ENCODE measurements at regions of chr5 and their contacts with region 1.

Region 1: GRCh38 chr5:151252762-151253604 is at the start of gene GM2A:
- DNase-seq: peak; percentile 99
- ATAC-seq: peak; percentile 83
- H3K4me3 ChIP-seq: peak within 1 kb of the TSS; percentile 74 to 96 (median 89)
- H3K4me3 Mint-ChIP-seq: peak within 1 kb of the TSS; percentile 95
- H3K27ac ChIP-seq: peak within 1 kb of the TSS; percentile 70 to 90
- H3K27ac Mint-ChIP-seq: peak within 1 kb of the TSS; percentile 88
- H3K4me1 ChIP-seq: peaks cover 48 to 54% of the 10 kb centered on the region in 2 donors
- H3K4me1 Mint-ChIP-seq: peaks cover 52% of the 10 kb centered on the region
- H3K27me3 ChIP-seq: no peaks in the 10 kb centered on the region
- H3K27me3 Mint-ChIP-seq: no peaks in the 10 kb centered on the region
- CTCF ChIP-seq: no peak
- total RNA-seq, gene GM2A: 82.7 and 89.3 TPM in 2 replicates

Region 2: DNA sequence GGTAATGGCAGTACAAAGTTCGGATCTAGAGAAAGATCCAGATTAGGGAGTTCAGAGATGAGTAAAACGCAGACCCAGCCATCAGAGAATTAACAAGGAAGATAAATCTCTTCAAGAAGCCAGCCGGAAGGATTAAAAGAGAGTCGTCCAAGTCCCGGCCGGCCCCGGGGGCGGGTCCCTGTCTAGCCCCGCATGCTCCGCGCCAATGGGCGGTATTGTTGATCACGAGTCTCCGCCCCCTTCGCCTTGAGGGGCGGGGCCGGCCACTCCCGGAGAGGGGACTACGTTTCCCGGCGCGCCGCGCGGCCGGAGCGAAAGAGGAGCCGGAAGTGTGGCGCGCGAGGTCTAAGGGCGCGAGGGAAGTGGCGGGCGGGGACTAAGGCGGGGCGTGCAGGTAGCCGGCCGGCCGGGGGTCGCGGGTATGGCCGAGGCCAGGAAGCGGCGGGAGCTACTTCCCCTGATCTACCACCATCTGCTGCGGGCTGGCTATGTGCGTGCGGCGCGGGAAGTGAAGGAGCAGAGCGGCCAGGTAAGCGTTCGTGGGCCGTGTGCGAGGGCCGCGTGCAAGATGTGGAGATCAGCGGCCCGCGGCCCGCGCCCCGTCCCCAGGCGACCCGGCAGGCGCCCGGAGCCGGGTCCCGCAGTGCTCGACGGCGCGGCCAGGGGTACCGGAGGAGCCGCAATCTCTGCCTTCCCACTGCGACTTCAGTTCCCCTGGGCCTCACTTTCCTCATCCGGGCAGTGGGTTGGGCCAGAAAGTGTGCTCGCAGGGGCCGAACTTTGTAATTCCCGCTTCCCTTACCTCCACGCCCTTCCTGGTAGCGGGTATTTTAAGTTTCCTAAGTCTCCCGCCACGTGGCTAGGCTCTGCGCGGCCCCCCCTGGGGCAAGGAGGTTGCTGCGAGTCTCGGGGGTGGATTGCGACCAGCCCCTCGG is 895.4 kb before region 1 on chr5 and contains the start of gene TCOF1:
- CTCF ChIA-PET with region 1: no interaction called
- POLR2A ChIA-PET with region 1: no interaction called
- intact Hi-C with region 1: loop called (anchors 2 kb)
- DNase-seq: peak; percentile 97
- ATAC-seq: peak; percentile 99
- H3K4me3 ChIP-seq: peak within 1 kb of the TSS; percentile 53 to 77 (median 69)
- H3K4me3 Mint-ChIP-seq: peak within 1 kb of the TSS; percentile 90
- H3K27ac ChIP-seq: peak within 1 kb of the TSS; percentile 23 to 68
- H3K27ac Mint-ChIP-seq: peak within 1 kb of the TSS; percentile 88
- H3K4me1 ChIP-seq: peaks cover 35 to 54% of the 10 kb centered on the region in 2 donors
- H3K4me1 Mint-ChIP-seq: peaks cover 50% of the 10 kb centered on the region
- H3K27me3 ChIP-seq: no peaks in the 10 kb centered on the region
- H3K27me3 Mint-ChIP-seq: no peaks in the 10 kb centered on the region
- CTCF ChIP-seq: no peak
- total RNA-seq, gene TCOF1: 62.4 and 66.5 TPM in 2 replicates

Region 3: GRCh38 chr5:150758531-150759333 is 494.3 kb before region 1 on chr5 and contains the start of gene DCTN4:
- CTCF ChIA-PET with region 1: no interaction called
- POLR2A ChIA-PET with region 1: no interaction called
- intact Hi-C with region 1: loop called (anchors 2 kb)
- DNase-seq: peak; percentile 98
- ATAC-seq: peak; percentile 91
- H3K4me3 ChIP-seq: peak within 1 kb of the TSS; percentile 81 to 95 (median 85)
- H3K4me3 Mint-ChIP-seq: no peak within 1 kb of the TSS
- H3K27ac ChIP-seq: peak within 1 kb of the TSS; percentile 91 to 93
- H3K27ac Mint-ChIP-seq: no peak within 1 kb of the TSS
- H3K4me1 ChIP-seq: peaks cover 15 to 20% of the 10 kb centered on the region in 2 donors
- H3K4me1 Mint-ChIP-seq: peaks cover 23% of the 10 kb centered on the region
- H3K27me3 ChIP-seq: peaks cover 0 to 6% (median 3%) of the 10 kb centered on the region in 4 experiments
- H3K27me3 Mint-ChIP-seq: peaks cover 3% of the 10 kb centered on the region
- CTCF ChIP-seq: no peak
- total RNA-seq, gene DCTN4: 54.4 and 58.4 TPM in 2 replicates

Region 4: GRCh38 chr5:151126199-151126645 is 126.8 kb before region 1 on chr5:
- CTCF ChIA-PET with region 1: interaction called, 28 read pairs
- POLR2A ChIA-PET with region 1: interaction called, 4 read pairs
- intact Hi-C with region 1: loop called (anchors 2 kb)
- DNase-seq: peak; percentile 80
- ATAC-seq: no peak
- H3K4me3 ChIP-seq: peak overlapping the region in 1 of 5 experiments; percentile 12
- H3K4me3 Mint-ChIP-seq: peak overlapping the region; percentile 88
- H3K27ac ChIP-seq: peak overlapping the region; percentile 87 to 91
- H3K27ac Mint-ChIP-seq: peak overlapping the region; percentile 91
- H3K4me1 ChIP-seq: peaks cover 50 to 74% of the 10 kb centered on the region in 2 donors
- H3K4me1 Mint-ChIP-seq: peaks cover 78% of the 10 kb centered on the region
- H3K27me3 ChIP-seq: no peaks in the 10 kb centered on the region
- H3K27me3 Mint-ChIP-seq: no peaks in the 10 kb centered on the region
- CTCF ChIP-seq: peak; percentile 78

Region 5: DNA sequence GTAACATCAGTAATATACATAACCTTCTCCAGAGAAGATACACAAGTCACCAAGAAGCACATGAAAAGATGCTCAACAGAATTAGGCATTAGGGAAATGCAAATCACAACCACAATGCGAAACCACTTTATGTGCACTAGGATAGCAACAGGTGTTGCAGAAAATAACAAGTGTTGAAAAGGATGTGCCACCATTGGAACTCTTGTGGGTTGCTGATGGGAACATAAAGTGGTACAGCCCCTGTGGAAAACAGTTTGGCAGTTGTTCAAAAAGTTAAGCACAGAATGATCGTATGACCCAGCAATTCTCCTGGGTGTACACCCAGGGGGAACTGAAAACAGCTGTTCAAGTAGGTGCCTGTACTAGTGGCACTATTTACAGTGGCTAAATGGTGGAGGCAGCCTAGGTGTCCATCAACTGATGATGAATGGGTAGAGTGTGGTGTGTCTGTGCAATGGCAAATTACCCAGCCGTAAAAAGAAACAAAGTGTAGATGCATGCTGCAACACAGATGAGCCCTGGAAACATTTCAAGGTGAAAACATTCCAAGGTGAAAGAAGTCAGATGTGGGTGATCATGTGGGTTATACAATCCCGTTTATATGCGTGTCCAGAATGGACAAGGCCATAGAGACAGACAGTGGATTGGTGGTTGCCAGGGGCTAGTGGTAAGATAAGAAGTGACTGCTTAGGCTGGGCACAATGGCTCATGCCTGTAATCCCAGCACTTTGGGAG is 56.3 kb before region 1 on chr5:
- CTCF ChIA-PET with region 1: interaction called, 4 read pairs
- POLR2A ChIA-PET with region 1: interaction called, 7 read pairs
- intact Hi-C with region 1: loop called (anchors 1 kb)
- DNase-seq: peak; percentile 82
- ATAC-seq: peak; percentile 95
- H3K4me3 ChIP-seq: no peak overlapping the region
- H3K4me3 Mint-ChIP-seq: peak overlapping the region; percentile 67
- H3K27ac ChIP-seq: peak overlapping the region; percentile 61 to 67
- H3K27ac Mint-ChIP-seq: peak overlapping the region; percentile 97
- H3K4me1 ChIP-seq: peaks cover 41 to 55% of the 10 kb centered on the region in 2 donors
- H3K4me1 Mint-ChIP-seq: peaks cover 63% of the 10 kb centered on the region
- H3K27me3 ChIP-seq: no peaks in the 10 kb centered on the region
- H3K27me3 Mint-ChIP-seq: no peaks in the 10 kb centered on the region
- CTCF ChIP-seq: no peak

Region 6: GRCh38 chr5:151239237-151239861 is 13.6 kb before region 1 on chr5:
- CTCF ChIA-PET with region 1: interaction called, 33 read pairs
- POLR2A ChIA-PET with region 1: interaction called, 10 read pairs
- intact Hi-C with region 1: loop called (anchors 1 kb)
- DNase-seq: peak; percentile 66
- ATAC-seq: peak; percentile 64
- H3K4me3 ChIP-seq: peak overlapping the region in 2 of 5 experiments; percentile 7 to 20
- H3K4me3 Mint-ChIP-seq: peak overlapping the region; percentile 84
- H3K27ac ChIP-seq: no peak overlapping the region
- H3K27ac Mint-ChIP-seq: peak overlapping the region; percentile 82
- H3K4me1 ChIP-seq: peaks cover 81 to 82% of the 10 kb centered on the region in 2 donors
- H3K4me1 Mint-ChIP-seq: peaks cover 95% of the 10 kb centered on the region
- H3K27me3 ChIP-seq: no peaks in the 10 kb centered on the region
- H3K27me3 Mint-ChIP-seq: no peaks in the 10 kb centered on the region
- CTCF ChIP-seq: peak; percentile 99

Region 7: DNA sequence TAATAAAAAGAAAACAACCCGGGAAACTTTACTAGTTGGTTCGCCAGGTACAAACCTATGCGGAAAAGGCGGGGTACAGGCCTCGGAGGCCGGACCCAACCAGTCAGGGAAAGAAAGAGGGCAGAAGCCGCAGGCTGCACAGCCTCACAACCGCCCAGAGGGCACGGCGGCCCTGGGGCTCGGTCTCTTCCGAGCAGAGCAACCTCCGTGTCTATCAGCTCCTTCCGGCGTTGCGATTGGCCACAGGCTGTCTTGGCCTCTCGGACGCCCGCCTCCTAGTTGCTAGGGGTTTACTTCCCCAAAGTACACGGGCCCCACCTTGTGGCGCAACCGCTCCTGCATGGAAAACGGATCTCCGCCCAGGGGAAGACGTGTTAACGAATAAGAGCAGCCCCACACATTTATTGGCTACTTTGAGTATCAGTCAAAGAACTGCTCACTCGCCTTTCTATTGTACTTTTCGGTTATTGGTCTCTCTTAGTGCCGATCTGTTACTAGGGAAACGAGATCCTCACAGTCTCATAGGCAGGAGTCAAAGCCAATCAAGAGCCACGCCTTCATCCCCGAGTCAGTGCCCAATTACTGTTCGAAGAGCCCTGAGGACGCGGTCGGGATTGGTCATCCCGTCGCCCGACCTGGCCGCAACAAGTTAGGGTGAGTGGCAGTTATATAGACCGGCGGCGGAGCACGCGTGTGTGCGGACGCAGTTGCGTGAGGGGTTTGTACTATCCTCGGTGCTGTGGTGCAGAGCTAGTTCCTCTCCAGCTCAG is 518.5 kb after region 1 on chr5 and contains the start of gene G3BP1:
- CTCF ChIA-PET with region 1: no interaction called
- POLR2A ChIA-PET with region 1: interaction called, 5 read pairs
- intact Hi-C with region 1: loop called (anchors 5 kb)
- DNase-seq: peak; percentile 100
- ATAC-seq: peak; percentile 74
- H3K4me3 ChIP-seq: peak within 1 kb of the TSS; percentile 71 to 91 (median 81)
- H3K4me3 Mint-ChIP-seq: peak within 1 kb of the TSS; percentile 95
- H3K27ac ChIP-seq: peak within 1 kb of the TSS; percentile 87 to 92
- H3K27ac Mint-ChIP-seq: peak within 1 kb of the TSS; percentile 93
- H3K4me1 ChIP-seq: peaks cover 42 to 45% of the 10 kb centered on the region in 2 donors
- H3K4me1 Mint-ChIP-seq: peaks cover 44% of the 10 kb centered on the region
- H3K27me3 ChIP-seq: no peaks in the 10 kb centered on the region
- H3K27me3 Mint-ChIP-seq: no peaks in the 10 kb centered on the region
- CTCF ChIP-seq: peak; percentile 66
- total RNA-seq, gene G3BP1: 159 and 173 TPM in 2 replicates